ENCODE measurements at regions of chr3 and their contacts with region 1.

Region 1: GRCh38 chr3:30199096-30199759 is 407.2 kb upstream of the TGFBR2 start:
- DNase-seq: peak; percentile 44 to 80 (median 56)
- H3K4me3 ChIP-seq: no peak overlapping the region
- H3K4me3 Mint-ChIP-seq: no peak overlapping the region
- H3K27ac ChIP-seq: no peak overlapping the region
- H3K27ac Mint-ChIP-seq: no peak overlapping the region
- H3K4me1 ChIP-seq: peaks cover 3 to 8% of the 10 kb centered on the region in 2 donors
- H3K4me1 Mint-ChIP-seq: peaks cover 9% of the 10 kb centered on the region
- H3K27me3 ChIP-seq: no peaks in the 10 kb centered on the region
- H3K27me3 Mint-ChIP-seq: peaks cover 0 to 3% (median 0%) of the 10 kb centered on the region in 3 donors
- CTCF ChIP-seq: peak; percentile 96

Region 2: GRCh38 chr3:30012941-30013543 is 186.2 kb before region 1 on chr3:
- intact Hi-C with region 1: loop called (anchors 5 to 10 kb)
- DNase-seq: peak; percentile 43 to 75 (median 60)
- H3K4me3 ChIP-seq: no peak overlapping the region
- H3K4me3 Mint-ChIP-seq: no peak overlapping the region
- H3K27ac ChIP-seq: no peak overlapping the region
- H3K27ac Mint-ChIP-seq: no peak overlapping the region
- H3K4me1 ChIP-seq: peaks cover 0 to under 1% of the 10 kb centered on the region in 2 donors
- H3K4me1 Mint-ChIP-seq: no peaks in the 10 kb centered on the region
- H3K27me3 ChIP-seq: no peaks in the 10 kb centered on the region
- H3K27me3 Mint-ChIP-seq: no peaks in the 10 kb centered on the region
- CTCF ChIP-seq: peak; percentile 87

Region 3: DNA sequence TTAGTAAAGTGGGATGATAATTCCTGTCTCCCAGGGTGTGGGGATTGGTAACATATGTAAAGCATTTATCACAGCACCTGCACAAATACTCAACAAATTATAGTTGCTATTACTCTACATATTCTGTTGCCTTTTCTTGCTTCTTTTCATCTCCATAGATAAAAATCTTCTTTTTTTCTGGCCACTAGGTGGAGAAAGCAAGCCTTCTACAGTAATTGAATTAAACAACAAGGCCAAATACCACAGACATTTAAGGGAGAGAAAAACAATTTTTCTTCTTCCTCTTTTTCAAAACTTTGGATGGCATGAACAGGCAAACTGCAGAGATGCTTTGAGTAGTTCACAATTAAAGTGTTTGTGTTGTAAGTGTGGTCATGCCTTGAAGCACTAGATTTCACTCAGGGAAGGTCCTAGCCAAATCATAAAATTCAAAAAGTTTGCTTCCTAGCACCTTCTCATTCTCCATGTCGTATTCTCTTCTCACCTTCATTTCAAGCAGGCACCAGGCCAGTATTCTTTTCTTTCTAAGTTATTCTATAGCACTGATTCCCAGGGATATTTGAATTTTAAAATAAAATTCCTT is 86.2 kb before region 1 on chr3:
- intact Hi-C with region 1: loop called in 1 of 2 experiments (anchors 10 kb)
- DNase-seq: peak; percentile 13 to 47 (median 13)
- H3K4me3 ChIP-seq: no peak overlapping the region
- H3K4me3 Mint-ChIP-seq: no peak overlapping the region
- H3K27ac ChIP-seq: no peak overlapping the region
- H3K27ac Mint-ChIP-seq: peak overlapping the region in 1 of 7 donors; percentile 8
- H3K4me1 ChIP-seq: no peaks in the 10 kb centered on the region
- H3K4me1 Mint-ChIP-seq: peaks cover 11% of the 10 kb centered on the region
- H3K27me3 ChIP-seq: no peaks in the 10 kb centered on the region
- H3K27me3 Mint-ChIP-seq: peaks cover 0 to 1% (median 1%) of the 10 kb centered on the region in 3 donors
- CTCF ChIP-seq: peak; percentile 62

Measured in CD14-positive monocyte (primary cell).